ENCODE measurements at regions of chr2 and their contacts with region 1.

Region 1: GRCh38 chr2:45595721-45596435 is 15.2 kb downstream of the SRBD1 start:
- DNase-seq: peak; percentile 64
- H3K4me3 ChIP-seq: no peak overlapping the region
- H3K27me3 ChIP-seq: no peaks in the 10 kb centered on the region
- CTCF ChIP-seq: no peak

Region 2: DNA sequence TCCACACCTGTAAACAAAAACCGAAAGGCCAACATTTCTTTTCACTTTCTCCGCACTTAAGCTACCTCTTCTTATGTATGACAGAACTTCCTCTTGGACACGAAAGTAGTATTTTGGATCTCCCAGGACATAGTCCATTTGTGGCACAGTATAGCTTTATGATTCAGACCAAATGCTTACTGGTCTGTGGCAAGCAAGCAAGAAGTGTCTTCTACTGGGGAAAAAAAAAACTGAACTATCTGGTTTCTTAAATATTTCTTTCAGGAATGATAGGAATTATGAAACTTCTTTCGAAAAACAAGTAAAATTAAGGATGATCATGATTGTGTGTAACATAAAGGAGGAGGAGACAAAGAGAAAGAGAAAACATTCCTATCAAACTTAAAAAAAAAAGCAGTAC is 18.4 kb before region 1 on chr2:
- CTCF ChIA-PET with region 1: interaction called, 3 read pairs
- POLR2A ChIA-PET with region 1: interaction called, 11 read pairs
- DNase-seq: no peak
- H3K4me3 ChIP-seq: no peak overlapping the region
- H3K27me3 ChIP-seq: no peaks in the 10 kb centered on the region
- CTCF ChIP-seq: no peak

Region 3: GRCh38 chr2:45585267-45585861 is 10.5 kb before region 1 on chr2:
- CTCF ChIA-PET with region 1: interaction called, 16 read pairs
- POLR2A ChIA-PET with region 1: no interaction called
- DNase-seq: no peak
- H3K4me3 ChIP-seq: no peak overlapping the region
- H3K27me3 ChIP-seq: no peaks in the 10 kb centered on the region
- CTCF ChIP-seq: peak; percentile 80

Region 4: DNA sequence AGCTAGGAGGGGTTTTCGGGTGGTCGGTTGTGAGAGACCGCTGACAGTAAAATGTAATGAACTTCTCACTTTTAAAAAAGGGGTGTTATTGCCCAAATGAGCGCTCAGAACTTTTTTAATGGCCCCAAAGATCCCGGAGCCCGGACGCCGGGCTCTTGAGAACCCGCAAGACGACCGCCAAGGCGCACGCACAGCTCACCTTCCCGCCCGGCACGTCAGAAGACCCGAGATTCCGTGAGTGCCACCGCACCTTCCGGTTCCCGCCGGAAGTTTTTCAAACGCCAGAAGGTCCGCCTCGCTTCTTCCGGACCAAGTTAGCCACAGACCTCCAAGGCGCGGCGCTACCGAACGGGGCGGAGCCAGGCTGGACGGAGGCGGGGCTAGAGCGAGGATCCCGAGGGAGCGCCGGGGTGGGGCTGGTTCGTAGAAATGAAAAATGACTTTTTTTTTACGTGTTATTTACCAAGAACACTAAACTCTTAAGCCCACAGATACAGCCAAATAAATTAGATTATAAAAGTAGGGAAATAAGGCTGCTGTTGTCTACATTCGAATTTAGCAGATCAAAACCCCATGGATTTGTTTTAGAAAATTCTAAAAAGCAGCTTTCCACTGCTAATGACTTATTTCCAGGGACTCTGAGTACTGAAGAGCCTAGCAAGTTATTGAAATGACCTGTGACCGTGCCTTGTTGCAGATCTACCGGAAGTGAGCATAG is 15.3 kb after region 1 on chr2 and contains the start of gene SRBD1:
- CTCF ChIA-PET with region 1: interaction called, 7 read pairs
- POLR2A ChIA-PET with region 1: interaction called, 10 read pairs
- DNase-seq: peak; percentile 70
- H3K4me3 ChIP-seq: peak within 1 kb of the TSS; percentile 55
- H3K27me3 ChIP-seq: no peaks in the 10 kb centered on the region
- CTCF ChIP-seq: no peak; the same call in 1 of the 2 replicates
- polyA plus RNA-seq, gene SRBD1: 2.7 and 6.6 TPM in 2 replicates

Region 5: GRCh38 chr2:45778720-45779171 is 182.9 kb after region 1 on chr2:
- CTCF ChIA-PET with region 1: no interaction called
- POLR2A ChIA-PET with region 1: no interaction called
- DNase-seq: no peak
- H3K4me3 ChIP-seq: no peak overlapping the region
- H3K27me3 ChIP-seq: no peaks in the 10 kb centered on the region
- CTCF ChIP-seq: peak; percentile 77

Measured in BJ (cell line).